ENCODE measurements at regions of chr19 and their contacts with region 1.

Region 1: GRCh38 chr19:771332-771785 is 20.4 kb downstream of the MISP start:
- DNase-seq: no peak
- ATAC-seq: peak in 3 of 4 donors; percentile 41 to 66 (median 61)
- H3K4me3 ChIP-seq: no peak overlapping the region
- H3K27ac ChIP-seq: no peak overlapping the region
- H3K4me1 ChIP-seq: peaks cover 0 to 11% (median 0%) of the 10 kb centered on the region in 12 donors
- H3K27me3 ChIP-seq: no peaks in the 10 kb centered on the region
- CTCF ChIP-seq: peak; percentile 37 to 62 (median 54)
- POLR2A ChIP-seq: no peak

Region 2: DNA sequence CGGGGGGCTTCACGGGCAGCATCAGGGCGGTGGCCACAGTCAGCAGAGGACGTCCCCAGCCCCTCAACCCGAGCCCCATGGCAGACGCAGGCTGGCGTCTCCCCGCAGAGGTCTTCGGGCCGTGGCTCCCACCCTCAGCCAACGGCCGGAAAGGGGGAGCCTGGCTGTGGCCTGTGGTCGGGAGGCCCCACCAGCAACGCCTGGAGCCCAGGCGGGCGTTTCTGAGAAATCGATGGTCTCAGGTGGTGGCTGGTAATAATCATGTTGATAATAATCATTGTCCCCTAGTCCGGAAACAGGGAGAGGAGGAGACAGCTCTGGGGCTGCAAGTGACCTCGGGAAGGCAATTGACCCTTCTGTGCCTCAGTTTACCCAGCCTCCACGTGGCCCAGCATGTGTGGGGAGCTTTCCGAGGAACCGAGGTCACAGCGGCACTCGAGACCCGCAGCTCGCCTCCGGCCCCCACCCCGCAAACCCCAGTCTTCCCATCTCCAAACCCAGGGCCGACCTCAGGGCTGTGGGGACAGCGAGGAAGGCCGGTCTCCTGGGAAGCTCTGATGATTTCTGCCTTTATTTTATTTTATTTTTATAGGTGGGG is 75.9 kb before region 1 on chr19 and contains the start of gene PRSS57:
- intact Hi-C with region 1: no loop called
- DNase-seq: no peak
- ATAC-seq: no peak
- H3K4me3 ChIP-seq: peak within 1 kb of the TSS in 1 of 12 donors; percentile 5
- H3K27ac ChIP-seq: no peak within 1 kb of the TSS
- H3K4me1 ChIP-seq: peaks cover 0 to 15% (median 0%) of the 10 kb centered on the region in 12 donors
- H3K27me3 ChIP-seq: peaks cover 0 to 17% (median 5%) of the 10 kb centered on the region in 9 donors
- CTCF ChIP-seq: no peak
- POLR2A ChIP-seq: no peak
- total RNA-seq, gene PRSS57: not detected

Region 3: DNA sequence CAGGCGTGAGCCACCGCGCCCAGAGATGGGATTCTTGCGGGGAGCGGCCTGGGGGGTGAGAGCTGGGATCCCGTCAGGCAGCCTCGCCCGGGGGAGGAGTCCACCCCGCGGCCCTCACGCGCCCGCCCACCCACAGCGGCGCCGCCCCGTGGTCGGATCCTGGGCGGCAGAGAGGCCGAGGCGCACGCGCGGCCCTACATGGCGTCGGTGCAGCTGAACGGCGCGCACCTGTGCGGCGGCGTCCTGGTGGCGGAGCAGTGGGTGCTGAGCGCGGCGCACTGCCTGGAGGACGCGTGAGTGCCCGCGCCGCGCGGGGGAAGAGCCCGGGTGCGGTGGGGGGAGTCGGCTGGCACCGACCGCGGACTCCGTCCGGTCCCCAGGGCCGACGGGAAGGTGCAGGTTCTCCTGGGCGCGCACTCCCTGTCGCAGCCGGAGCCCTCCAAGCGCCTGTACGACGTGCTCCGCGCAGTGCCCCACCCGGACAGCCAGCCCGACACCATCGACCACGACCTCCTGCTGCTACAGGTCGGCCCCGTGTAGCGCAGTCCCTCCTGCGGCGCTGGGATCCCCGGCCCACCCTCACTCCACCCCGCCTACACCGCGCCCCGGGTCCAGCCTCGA is 89.2 kb after region 1 on chr19:
- intact Hi-C with region 1: loop called in 8 of 10 experiments (anchors 5 to 10 kb)
- DNase-seq: peak in 4 of 5 donors; percentile 77 to 82 (median 79)
- ATAC-seq: peak in 3 of 4 donors; percentile 52 to 67 (median 65)
- H3K4me3 ChIP-seq: peak overlapping the region; percentile 13 to 59 (median 44)
- H3K27ac ChIP-seq: peak overlapping the region in 7 of 12 donors; percentile 31 to 80 (median 75)
- H3K4me1 ChIP-seq: peaks cover 0 to 42% (median 4%) of the 10 kb centered on the region in 12 donors
- H3K27me3 ChIP-seq: peaks cover 0 to 48% (median 17%) of the 10 kb centered on the region in 9 donors
- CTCF ChIP-seq: peak in 6 of 12 donors; percentile 13 to 39 (median 22)
- POLR2A ChIP-seq: no peak

Region 4: GRCh38 chr19:913080-913748 is 141.9 kb after region 1 on chr19 and contains the start of gene R3HDM4:
- intact Hi-C with region 1: loop called in 2 of 10 experiments (anchors 1 to 5 kb)
- DNase-seq: peak; percentile 84 to 93 (median 87)
- ATAC-seq: peak; percentile 79 to 95 (median 90)
- H3K4me3 ChIP-seq: peak within 1 kb of the TSS; percentile 72 to 99 (median 88)
- H3K27ac ChIP-seq: peak within 1 kb of the TSS in 11 of 12 donors; percentile 80 to 97 (median 92)
- H3K4me1 ChIP-seq: peaks cover 7 to 56% (median 19%) of the 10 kb centered on the region in 12 donors
- H3K27me3 ChIP-seq: peaks cover 13 to 23% (median 18%) of the 10 kb centered on the region in 9 donors
- CTCF ChIP-seq: no peak
- POLR2A ChIP-seq: peak in 1 of 2 donors; percentile 51
- total RNA-seq, gene R3HDM4: 17.1 to 35.5 (median 23.8) TPM

Region 5: GRCh38 chr19:925526-926322 is 154.4 kb after region 1 on chr19 and contains the start of gene ARID3A:
- intact Hi-C with region 1: loop called (anchors 1 to 2 kb)
- DNase-seq: peak; percentile 77 to 91 (median 83)
- ATAC-seq: peak; percentile 25 to 83 (median 80)
- H3K4me3 ChIP-seq: peak within 1 kb of the TSS; percentile 54 to 96 (median 86)
- H3K27ac ChIP-seq: peak within 1 kb of the TSS in 11 of 12 donors; percentile 53 to 93 (median 82)
- H3K4me1 ChIP-seq: peaks cover 0 to 39% (median 18%) of the 10 kb centered on the region in 12 donors
- H3K27me3 ChIP-seq: peaks cover 5 to 8% (median 8%) of the 10 kb centered on the region in 9 donors
- CTCF ChIP-seq: peak in 1 of 12 donors; percentile 13
- POLR2A ChIP-seq: no peak
- total RNA-seq, gene ARID3A: 1.9 to 15.7 (median 5.8) TPM

Region 6: DNA sequence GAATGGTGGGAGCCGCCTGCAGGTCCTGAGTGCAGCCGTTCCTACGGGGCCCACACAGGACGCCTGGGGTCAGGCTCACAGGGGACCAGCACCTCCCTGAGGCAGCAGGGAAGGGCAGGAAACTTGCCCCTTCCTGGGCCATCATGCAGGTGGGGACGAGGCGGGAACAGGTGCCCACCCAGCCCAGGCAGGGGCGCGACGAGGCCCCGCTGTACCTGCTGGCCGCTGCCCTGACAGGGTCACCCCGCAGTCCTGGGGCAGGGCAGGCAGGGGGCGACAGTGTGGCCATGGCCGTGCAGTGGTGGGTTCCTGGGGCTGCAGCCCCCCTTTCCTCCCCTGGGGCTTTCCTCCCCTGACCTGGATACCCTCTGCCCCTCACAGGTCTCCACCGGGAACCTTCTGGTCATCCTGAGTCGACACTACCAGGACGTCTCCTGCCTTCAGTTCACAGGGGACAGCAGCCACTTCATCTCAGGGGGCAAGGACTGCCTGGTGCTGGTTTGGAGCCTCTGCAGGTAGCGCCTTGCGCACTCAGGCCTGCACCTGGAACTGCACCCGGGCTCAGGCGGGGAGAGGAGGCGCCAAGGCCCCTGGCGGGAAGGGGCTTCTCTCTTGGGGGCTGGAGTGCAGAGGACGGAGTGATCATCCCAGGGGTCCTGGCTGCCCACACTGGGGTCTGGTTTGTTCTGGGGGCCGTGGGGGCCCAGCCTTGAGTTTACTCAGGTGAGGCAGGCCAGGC is 218.2 kb after region 1 on chr19:
- intact Hi-C with region 1: loop called in 8 of 10 experiments (anchors 5 to 10 kb)
- DNase-seq: no peak
- ATAC-seq: no peak
- H3K4me3 ChIP-seq: no peak overlapping the region
- H3K27ac ChIP-seq: no peak overlapping the region
- H3K4me1 ChIP-seq: peaks cover 0 to 11% (median 6%) of the 10 kb centered on the region in 12 donors
- H3K27me3 ChIP-seq: no peaks in the 10 kb centered on the region
- CTCF ChIP-seq: peak in 2 of 12 donors; percentile 12 to 24
- POLR2A ChIP-seq: no peak